ENCODE measurements at regions of chr2 and their contacts with region 1.

Region 1: DNA sequence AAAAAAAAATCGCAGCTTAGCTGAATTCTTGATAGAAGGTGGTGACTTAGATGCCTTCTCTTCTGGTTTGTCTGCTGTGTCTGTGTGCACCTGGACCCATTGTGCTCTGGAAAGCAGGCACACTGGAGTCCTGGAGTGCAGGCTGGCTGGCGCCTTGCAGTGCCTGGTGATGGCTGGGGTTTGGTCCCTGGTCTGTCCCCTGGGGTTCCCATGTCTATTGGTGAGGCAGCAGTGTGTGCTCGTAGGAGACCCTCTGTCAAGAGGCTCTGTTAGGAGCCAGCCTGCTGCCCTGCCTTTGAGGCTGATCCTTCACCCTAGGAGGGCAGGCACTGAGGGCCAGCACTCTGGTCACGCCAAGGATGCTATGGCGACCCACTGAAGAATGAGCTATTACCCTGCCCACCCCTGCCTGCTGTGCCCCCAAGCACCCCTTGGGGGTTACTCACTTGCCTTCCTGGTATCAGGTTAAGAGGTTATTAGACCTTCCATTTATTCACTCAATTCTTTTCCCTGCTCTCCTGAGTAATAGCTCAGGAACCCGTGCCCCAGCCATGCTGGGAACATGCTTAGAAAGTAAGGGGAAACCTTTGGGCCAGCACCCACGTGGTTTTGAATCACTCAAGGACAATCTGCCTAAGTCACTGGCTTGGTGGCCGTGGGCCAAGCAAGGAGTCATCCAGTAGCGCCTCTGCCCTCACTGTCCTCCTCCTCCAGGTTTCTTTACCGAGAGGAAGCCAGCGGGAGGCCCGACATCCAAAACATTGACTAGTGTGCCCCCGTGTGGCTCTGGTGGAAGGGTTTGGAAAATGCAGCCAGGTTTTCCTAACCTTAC is 284.5 kb downstream of the PRKCE start:
- DNase-seq: peak; percentile 73 to 83
- H3K4me3 ChIP-seq: no peak overlapping the region
- H3K4me1 ChIP-seq: no peaks in the 10 kb centered on the region
- H3K27me3 ChIP-seq: no peaks in the 10 kb centered on the region

Region 2: DNA sequence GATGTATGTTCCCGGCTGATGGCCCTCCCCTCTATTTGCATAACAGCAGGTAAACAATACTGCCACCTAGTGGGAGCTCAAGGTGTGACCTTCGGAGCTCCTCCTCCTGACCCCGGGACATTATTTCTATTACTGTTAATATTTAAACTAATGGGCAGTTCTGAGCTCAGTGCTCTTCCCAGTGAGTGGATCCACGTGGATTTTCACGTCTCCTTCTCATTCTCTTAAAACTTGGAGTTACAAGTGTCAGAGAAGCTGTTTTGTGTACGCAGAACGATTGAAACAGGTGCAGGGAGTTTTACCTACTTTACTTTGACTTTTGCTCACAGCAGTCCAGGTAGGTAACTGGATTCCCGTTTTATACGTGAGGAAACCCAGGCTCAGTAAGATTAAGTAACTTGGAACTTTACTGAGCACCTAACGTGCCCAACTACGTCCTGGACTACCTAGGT is 157.3 kb before region 1 on chr2:
- in situ Hi-C with region 1: loop called (anchors 5 kb)
- DNase-seq: peak; percentile 49 to 82
- H3K4me3 ChIP-seq: no peak overlapping the region
- H3K4me1 ChIP-seq: no peaks in the 10 kb centered on the region
- H3K27me3 ChIP-seq: no peaks in the 10 kb centered on the region

Region 3: DNA sequence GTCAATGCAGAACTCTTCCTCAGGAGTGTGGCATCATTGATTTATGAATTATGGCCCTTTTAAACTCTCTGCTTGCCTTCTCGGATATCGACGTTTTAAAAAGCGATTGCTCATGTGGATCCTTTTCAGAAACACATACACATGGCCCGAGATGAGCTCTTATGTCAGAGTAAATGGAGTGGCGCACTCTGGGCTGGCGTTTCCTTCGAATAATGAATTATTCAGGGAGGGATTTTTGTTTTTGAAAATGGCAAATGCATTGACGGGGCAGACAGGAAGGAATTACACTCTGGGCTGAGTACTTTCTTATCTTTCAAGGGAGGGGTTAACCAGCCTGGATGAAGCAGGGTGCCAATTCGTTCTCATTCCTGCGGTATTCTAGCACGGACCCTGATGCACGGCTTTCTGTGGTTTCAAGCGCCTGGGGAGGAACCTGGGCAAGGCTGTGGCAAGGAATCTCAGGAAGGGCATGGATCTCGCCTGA is 141.8 kb before region 1 on chr2:
- in situ Hi-C with region 1: no loop called
- DNase-seq: no peak
- H3K4me3 ChIP-seq: no peak overlapping the region
- H3K4me1 ChIP-seq: no peaks in the 10 kb centered on the region
- H3K27me3 ChIP-seq: no peaks in the 10 kb centered on the region

Measured in HAP-1 (cell line).